ENCODE measurements at regions of chr6 and their contacts with region 1.

Region 1: GRCh38 chr6:169950558-169950957 is 199.1 kb downstream of the ERMARD start:
- DNase-seq: peak; percentile 66
- H3K4me3 Mint-ChIP-seq: no peak overlapping the region
- H3K27ac Mint-ChIP-seq: no peak overlapping the region
- H3K4me1 Mint-ChIP-seq: no peaks in the 10 kb centered on the region
- H3K27me3 Mint-ChIP-seq: no peaks in the 10 kb centered on the region

Region 2: GRCh38 chr6:170529839-170530469 is 579.4 kb after region 1 on chr6:
- CTCF ChIA-PET with region 1: interaction called, 3 read pairs
- intact Hi-C with region 1: loop called (anchors 1 kb)
- DNase-seq: peak; percentile 84
- H3K4me3 Mint-ChIP-seq: no peak overlapping the region
- H3K27ac Mint-ChIP-seq: no peak overlapping the region
- H3K4me1 Mint-ChIP-seq: no peaks in the 10 kb centered on the region
- H3K27me3 Mint-ChIP-seq: no peaks in the 10 kb centered on the region